HepG2 (cell line): ENCODE measurements at regions of chr2 and their contacts with region 1.

Region 1: DNA sequence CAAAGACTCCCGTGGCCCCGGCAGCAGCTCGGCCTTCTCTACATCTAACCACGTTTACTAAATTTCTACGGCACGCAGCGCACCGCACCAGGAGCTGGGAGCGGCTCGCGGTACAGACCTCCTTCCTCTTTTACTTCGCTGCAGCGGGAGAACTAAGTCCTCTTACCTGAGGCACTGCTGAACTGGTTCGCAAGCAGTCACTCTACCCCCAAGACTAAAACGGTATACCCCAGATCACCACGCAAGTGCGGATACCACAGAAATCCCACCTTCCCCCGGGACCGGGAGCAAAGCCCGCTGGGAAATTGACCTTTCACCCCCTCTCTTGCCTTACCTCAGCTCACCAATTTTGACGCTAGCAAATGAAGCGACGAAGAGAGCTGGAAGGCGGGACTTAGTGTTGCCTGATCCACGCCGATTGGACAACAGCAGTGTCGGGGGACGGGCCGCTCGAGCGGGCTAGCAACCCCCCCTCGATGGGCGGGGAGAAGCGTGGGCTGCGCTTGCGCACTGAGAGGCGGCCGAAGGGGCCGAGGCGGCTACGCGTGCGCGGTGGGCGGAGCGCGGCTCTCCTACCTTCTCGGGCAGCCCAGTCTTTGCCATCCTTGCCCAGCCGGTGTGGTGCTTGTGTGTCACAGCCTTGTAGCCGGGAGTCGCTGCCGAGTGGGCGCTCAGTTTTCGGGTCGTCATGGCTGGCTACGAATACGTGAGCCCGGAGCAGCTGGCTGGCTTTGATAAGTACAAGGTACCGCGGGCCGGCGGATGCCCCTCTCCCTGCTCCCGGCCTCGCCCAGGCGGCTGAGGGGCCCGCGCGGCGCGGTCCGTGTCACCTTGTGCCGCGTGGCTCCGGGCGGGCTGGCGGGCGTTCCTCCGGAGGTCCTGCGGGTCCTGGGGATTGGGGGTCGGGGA is at the start of gene SELENOI:
- DNase-seq: peak; percentile 100
- ATAC-seq: peak; percentile 95
- H3K4me3 ChIP-seq: peak within 1 kb of the TSS; percentile 89 to 96 (median 94)
- H3K27ac ChIP-seq: peak within 1 kb of the TSS; percentile 97
- H3K4me1 ChIP-seq: peaks cover 63% of the 10 kb centered on the region
- H3K27me3 ChIP-seq: no peaks in the 10 kb centered on the region; a peak in 1 of 5 replicates
- CTCF ChIP-seq: no peak; the same call in 1 of the 2 replicates
- EP300 ChIP-seq: peak; percentile 46 to 56; a peak in 3 of 4 replicates
- POLR2A ChIP-seq: peak; percentile 94 to 99
- RAD21 ChIP-seq: peak; percentile 33; the same call in 1 of the 2 replicates
- total RNA-seq, gene SELENOI: 60.3 and 66.0 TPM in 2 replicates

Region 2: GRCh38 chr2:25982273-25982967 is 363.4 kb before region 1 on chr2 and contains the start of gene KIF3C:
- CTCF ChIA-PET with region 1: no interaction called
- POLR2A ChIA-PET with region 1: interaction called, 3 read pairs
- in situ Hi-C with region 1: loop called (anchors 25 kb)
- intact Hi-C with region 1: no loop called
- DNase-seq: peak; percentile 66
- ATAC-seq: peak; percentile 86
- H3K4me3 ChIP-seq: peak within 1 kb of the TSS; percentile 80 to 90 (median 86)
- H3K27ac ChIP-seq: no peak within 1 kb of the TSS
- H3K4me1 ChIP-seq: peaks cover 49% of the 10 kb centered on the region
- H3K27me3 ChIP-seq: no peaks in the 10 kb centered on the region
- CTCF ChIP-seq: peak; percentile 19; the same call in 1 of the 2 replicates
- EP300 ChIP-seq: no peak
- POLR2A ChIP-seq: no peak
- RAD21 ChIP-seq: no peak
- total RNA-seq, gene KIF3C: 3.4 and 3.6 TPM in 2 replicates

Region 3: GRCh38 chr2:26456440-26457250 is 110.8 kb after region 1 on chr2:
- CTCF ChIA-PET with region 1: no interaction called
- POLR2A ChIA-PET with region 1: interaction called, 52 read pairs
- in situ Hi-C with region 1: no loop called
- intact Hi-C with region 1: no loop called
- DNase-seq: peak; percentile 82
- ATAC-seq: peak; percentile 85
- H3K4me3 ChIP-seq: peak overlapping the region; percentile 46 to 76 (median 50)
- H3K27ac ChIP-seq: peak overlapping the region; percentile 69
- H3K4me1 ChIP-seq: peaks cover 43% of the 10 kb centered on the region
- H3K27me3 ChIP-seq: no peaks in the 10 kb centered on the region; a peak in 1 of 5 replicates
- CTCF ChIP-seq: 0 out of 2 replicates have a peak, but pooled peaks have one; percentile 2
- EP300 ChIP-seq: peak; percentile 49 to 67; a peak in 2 of 4 replicates
- POLR2A ChIP-seq: peak in 1 of 2 experiments; percentile 29; a peak in 1 of 4 replicates
- RAD21 ChIP-seq: no peak